ENCODE measurements at regions of chr19 and their contacts with region 1.

Region 1: DNA sequence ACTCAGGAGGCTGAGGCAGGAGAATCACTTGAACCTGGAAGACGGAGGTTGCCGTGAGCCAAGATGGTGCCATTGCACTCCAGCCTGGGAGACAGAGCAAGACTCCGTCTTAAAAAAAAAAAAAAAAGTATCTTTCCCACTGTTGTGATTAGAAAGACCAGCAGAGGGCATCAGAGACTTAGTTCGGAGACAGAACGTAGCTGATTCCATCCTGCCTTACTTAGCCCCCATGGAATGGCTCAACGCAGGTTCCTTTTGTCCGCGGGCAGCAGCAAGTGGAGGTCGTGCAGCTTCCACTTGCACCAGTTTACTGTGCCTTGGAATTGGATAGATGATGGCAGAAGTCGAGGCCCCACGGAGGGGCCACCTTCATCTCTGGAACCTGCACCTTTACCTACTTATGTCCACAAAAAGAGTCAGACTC is 8.1 kb downstream of the TIMM29 start:
- DNase-seq: peak; percentile 64
- H3K4me3 ChIP-seq: no peak overlapping the region
- H3K27ac ChIP-seq: no peak overlapping the region
- H3K4me1 ChIP-seq: peaks cover 21% of the 10 kb centered on the region
- H3K27me3 ChIP-seq: no peaks in the 10 kb centered on the region
- CTCF ChIP-seq: peak; percentile 44 to 70

Region 2: DNA sequence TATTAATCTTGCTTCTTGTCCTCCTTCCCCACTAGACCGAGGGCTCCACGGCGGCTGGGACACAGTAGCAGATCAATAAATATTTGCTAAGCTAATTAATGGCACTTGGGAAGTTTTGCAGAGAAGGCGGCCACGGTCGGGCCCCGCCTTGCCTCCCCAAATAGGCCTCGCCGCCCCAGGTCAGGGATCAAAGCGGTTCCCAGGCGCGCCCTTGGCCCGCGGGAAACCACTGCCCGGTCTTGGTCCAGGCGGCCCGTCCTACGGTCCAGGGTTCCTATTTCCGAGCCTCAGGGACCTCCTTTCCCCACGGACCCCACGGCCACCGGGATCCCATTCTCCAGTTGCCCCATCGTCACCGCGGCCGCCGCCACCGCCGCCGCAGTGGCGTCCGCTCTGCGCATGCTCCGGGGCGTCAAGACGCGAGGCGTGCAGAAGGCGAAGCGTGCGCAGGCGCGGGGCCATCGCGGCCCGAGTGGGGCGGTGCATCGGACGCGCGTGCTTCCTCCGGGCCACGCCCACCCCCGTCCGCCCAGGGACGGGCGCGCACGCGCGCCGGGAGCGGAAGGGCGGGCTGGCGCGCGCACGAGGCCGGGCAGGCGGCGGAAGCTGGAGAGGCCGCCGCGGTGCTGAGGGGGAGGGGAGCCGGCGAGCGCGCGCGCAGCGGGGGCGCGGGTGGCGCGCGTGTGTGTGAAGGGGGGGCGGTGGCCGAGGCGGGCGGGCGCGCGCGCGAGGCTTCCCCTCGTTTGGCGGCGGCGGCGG is 23.8 kb after region 1 on chr19 and contains the start of gene SMARCA4:
- CTCF ChIA-PET with region 1: interaction called, 10 read pairs
- dilution Hi-C with region 1: no loop called
- in situ Hi-C with region 1: no loop called
- intact Hi-C with region 1: no loop called
- DNase-seq: peak; percentile 95
- H3K4me3 ChIP-seq: peak within 1 kb of the TSS; percentile 80 to 92 (median 88)
- H3K27ac ChIP-seq: peak within 1 kb of the TSS; percentile 66
- H3K4me1 ChIP-seq: peaks cover 2% of the 10 kb centered on the region
- H3K27me3 ChIP-seq: no peaks in the 10 kb centered on the region
- CTCF ChIP-seq: no peak
- total RNA-seq, gene SMARCA4: 67.0 to 110 TPM

Region 3: DNA sequence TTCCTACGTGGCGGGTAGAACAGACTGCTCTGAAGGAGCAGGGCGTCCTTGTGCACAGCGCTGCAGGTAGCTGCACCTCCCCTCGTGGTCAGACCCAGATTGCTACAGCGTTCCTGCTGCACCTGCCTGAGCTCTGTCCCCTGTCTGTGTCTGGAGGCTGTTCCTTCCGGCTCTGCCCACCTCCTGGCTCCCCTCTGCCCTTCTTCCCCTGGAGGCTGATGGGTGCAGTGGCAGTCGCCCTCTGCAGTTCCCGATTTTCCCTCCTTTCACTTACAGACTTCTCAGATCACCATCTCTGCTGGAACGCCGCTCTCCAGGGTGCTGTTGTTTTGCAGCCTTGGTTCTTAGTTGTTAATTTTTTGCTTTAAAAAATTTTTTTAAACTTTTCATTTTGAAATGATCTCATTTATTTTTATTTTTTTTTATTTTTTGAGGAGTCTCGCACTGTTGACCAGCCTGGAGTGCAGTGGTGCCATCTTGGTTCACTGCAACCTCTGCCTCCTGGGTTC is 77.8 kb after region 1 on chr19:
- CTCF ChIA-PET with region 1: no interaction called
- dilution Hi-C with region 1: no loop called
- in situ Hi-C with region 1: no loop called
- intact Hi-C with region 1: loop called (anchors 5 kb)
- DNase-seq: no peak
- H3K4me3 ChIP-seq: no peak overlapping the region
- H3K27ac ChIP-seq: no peak overlapping the region
- H3K4me1 ChIP-seq: peaks cover 8% of the 10 kb centered on the region
- H3K27me3 ChIP-seq: no peaks in the 10 kb centered on the region
- CTCF ChIP-seq: no peak

Region 4: DNA sequence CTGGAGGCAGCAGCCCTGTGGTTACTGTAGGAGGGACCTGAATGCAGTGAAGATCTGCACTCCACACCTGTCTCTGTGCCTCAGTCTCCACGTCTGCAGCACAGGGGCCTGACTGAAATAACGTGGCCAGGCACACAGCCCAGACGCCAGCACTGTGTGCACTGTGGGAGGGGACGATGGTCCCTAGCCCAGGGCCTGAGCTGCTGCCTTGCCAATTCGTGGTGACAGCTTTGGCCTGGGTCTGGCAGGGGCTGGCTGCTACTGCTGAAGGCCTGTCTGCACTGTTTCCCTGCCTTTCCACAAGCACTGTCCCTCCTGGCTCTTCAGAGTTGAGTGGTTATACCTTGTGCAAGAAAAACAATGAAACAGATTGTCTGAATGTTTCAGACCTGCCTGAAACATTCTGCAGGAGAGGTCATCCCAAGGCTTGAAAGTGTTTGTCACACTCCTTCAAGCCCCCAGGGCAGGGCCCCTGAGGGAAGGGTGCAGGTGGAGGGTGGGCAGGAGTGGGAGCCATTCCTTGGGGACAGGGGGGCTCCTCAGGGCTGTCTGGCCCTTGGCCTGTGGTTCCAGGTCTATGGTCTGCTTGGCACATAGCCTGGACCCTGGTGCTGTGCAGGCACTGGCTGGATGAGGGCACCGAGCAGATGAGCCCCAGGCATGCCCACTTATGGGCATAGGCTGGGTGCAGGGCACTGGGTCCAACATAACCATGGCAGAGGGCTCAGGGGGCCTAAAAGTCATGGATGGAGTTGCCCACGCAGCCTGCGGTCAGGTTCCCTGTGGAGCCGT is 113.8 kb after region 1 on chr19:
- CTCF ChIA-PET with region 1: no interaction called
- dilution Hi-C with region 1: no loop called
- in situ Hi-C with region 1: no loop called
- intact Hi-C with region 1: no loop called
- DNase-seq: no peak
- H3K4me3 ChIP-seq: no peak overlapping the region
- H3K27ac ChIP-seq: no peak overlapping the region
- H3K4me1 ChIP-seq: peaks cover 14% of the 10 kb centered on the region
- H3K27me3 ChIP-seq: no peaks in the 10 kb centered on the region
- CTCF ChIP-seq: no peak

Region 5: DNA sequence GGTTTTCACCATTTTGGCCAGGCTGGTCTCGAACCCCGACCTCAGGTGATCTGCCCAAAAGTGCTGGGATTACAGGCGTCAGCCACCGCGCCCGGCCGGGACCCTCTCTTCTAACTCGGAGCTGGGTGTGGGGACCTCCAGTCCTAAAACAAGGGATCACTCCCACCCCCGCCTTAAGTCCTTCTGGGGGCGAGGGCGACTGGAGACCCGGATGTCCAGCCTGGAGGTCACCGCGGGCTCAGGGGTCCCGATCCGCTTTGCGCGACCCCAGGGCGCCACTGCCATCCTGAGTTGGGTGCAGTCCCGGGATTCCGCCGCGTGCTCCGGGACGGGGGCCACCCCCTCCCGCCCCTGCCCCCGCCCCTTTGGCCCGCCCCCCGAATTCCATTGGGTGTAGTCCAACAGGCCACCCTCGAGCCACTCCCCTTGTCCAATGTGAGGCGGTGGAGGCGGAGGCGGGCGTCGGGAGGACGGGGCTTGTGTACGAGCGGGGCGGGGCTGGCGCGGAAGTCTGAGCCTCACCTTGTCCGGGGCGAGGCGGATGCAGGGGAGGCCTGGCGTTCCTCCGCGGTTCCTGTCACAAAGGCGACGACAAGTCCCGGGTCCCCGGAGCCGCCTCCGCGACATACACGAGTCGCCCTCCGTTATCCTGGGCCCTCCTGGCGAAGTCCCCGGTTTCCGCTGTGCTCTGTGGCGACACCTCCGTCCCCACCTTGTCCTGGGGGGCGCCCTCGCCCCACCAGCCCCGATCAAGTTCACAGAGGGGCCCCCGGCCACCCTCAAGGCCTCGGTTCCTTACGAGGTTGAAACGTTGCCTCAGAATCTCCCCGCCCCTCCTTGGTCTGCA is 153.6 kb after region 1 on chr19:
- CTCF ChIA-PET with region 1: no interaction called
- dilution Hi-C with region 1: no loop called
- in situ Hi-C with region 1: loop called in 1 of 2 experiments (anchors 10 kb)
- intact Hi-C with region 1: no loop called
- DNase-seq: peak; percentile 93
- H3K4me3 ChIP-seq: peak overlapping the region; percentile 85 to 89 (median 87)
- H3K27ac ChIP-seq: peak overlapping the region; percentile 100
- H3K4me1 ChIP-seq: peaks cover 32% of the 10 kb centered on the region
- H3K27me3 ChIP-seq: no peaks in the 10 kb centered on the region
- CTCF ChIP-seq: no peak

Region 6: DNA sequence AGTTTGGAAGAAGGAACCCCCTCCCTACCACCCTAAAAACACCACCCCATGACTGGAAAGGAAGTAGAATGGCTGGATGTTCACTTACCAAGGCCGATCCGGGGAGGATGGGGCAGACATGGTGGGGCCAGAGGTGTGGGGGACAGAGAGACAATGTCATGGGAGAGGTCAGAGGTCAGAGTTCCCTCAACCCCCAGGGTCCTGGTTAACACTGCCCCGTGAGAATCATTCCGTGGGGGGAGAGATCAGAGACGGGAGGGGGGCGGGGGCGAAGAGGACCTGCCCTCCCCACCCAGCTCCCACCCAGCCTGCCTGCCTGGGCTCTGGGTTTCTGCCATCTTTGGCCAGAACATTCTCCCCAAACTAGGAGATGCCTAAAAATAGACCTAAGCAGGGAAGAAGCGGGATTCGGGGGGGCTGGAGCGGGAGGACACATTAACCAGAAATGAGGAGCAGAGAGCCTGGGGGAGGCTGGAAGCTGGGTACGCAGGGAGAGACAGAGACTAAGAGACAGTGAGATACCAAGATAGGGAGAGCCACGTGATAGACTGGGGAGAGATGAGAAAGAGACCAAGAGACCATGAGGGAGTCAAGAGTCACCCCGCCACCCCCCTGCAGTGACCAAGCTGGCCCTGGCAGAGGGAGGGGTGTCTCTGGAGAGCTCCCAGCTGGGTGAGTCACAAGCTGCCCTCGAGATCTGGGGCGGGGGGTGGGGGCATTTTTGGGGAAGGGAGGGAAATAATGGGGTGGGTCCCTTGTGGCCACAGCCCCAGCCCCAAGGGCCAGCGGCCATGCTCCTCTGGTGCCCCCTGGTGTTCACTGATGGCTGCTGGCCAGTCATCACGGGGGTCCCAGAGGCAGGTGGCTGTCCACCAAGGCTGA is 266.8 kb after region 1 on chr19:
- CTCF ChIA-PET with region 1: no interaction called
- dilution Hi-C with region 1: no loop called
- in situ Hi-C with region 1: no loop called
- intact Hi-C with region 1: loop called (anchors 5 kb)
- DNase-seq: peak; percentile 11
- H3K4me3 ChIP-seq: no peak overlapping the region
- H3K27ac ChIP-seq: no peak overlapping the region
- H3K4me1 ChIP-seq: peaks cover 19% of the 10 kb centered on the region
- H3K27me3 ChIP-seq: no peaks in the 10 kb centered on the region
- CTCF ChIP-seq: peak; percentile 54 to 89

Measured in mammary epithelial cell (primary cell).